ENCODE measurements at regions of chr3 and their contacts with region 1.

Region 1: DNA sequence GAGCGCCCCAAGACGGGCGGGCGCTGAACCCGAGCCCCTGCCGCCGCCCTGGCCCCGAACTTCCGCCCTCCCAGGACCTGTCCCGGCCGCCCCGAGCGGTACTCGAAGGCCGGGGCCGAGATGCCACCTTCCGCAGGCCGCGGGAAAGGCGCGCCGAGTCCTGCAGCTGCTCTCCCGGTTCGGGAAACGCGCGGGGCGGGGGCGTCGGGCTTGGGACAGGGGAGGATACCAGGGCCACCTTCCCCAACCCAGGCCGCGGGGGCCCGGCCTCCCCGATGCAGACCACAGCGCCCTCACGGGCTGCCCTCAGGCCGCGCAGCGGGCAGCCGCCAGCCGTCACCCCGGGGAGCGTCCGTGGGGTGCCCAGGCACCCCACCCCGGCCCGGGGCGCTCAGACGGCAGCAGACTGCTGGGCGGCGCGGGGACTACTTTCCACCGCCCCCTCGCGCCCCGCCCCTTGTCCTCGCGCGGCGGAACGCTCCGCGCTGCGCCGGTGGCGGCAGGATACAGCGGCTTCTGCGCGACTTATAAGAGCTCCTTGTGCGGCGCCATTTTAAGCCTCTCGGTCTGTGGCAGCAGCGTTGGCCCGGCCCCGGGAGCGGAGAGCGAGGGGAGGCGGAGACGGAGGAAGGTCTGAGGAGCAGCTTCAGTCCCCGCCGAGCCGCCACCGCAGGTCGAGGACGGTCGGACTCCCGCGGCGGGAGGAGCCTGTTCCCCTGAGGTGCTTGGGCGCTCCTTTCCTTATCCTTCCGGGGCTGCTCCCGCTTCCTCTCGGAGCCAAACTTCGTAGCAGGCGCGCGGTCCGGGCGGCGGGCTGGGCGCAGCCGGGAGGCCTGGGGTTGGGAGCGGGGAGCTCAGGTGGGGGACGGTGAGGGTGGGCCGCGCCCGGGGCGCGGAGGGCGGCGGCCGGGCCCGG is at the start of gene CTNNB1:
- DNase-seq: peak; percentile 91
- ATAC-seq: peak; percentile 80
- H3K4me3 Mint-ChIP-seq: peak within 1 kb of the TSS; percentile 94
- H3K27ac Mint-ChIP-seq: peak within 1 kb of the TSS; percentile 96
- H3K4me1 Mint-ChIP-seq: peaks cover 40% of the 10 kb centered on the region
- H3K27me3 Mint-ChIP-seq: peaks cover 4% of the 10 kb centered on the region
- CTCF ChIP-seq: no peak
- total RNA-seq, gene CTNNB1: 155 and 164 TPM in 2 replicates

Region 2: DNA sequence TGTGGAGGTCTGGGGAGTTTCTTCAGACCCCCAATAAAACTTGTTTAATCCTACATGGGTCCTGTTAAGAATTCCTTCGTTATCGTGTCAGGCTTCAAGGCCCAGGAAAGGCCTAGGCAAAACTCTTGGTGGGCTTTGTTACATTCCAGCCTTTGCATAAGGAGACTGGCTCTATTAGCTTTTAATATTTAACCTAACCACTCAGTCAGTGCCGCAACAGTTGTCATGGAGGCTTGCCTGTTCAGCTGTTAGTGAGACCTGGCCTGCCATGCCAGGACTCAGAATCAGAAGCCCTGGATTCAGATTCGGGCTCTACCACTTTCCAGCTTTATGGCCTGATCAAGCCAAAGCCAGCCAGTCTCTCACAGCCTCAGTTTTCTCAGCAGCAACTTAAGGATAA is 870.1 kb before region 1 on chr3:
- CTCF ChIA-PET with region 1: no interaction called
- POLR2A ChIA-PET with region 1: no interaction called
- intact Hi-C with region 1: loop called (anchors 5 kb)
- DNase-seq: no peak
- ATAC-seq: no peak
- H3K4me3 Mint-ChIP-seq: no peak overlapping the region
- H3K27ac Mint-ChIP-seq: no peak overlapping the region
- H3K4me1 Mint-ChIP-seq: peaks cover 4% of the 10 kb centered on the region
- H3K27me3 Mint-ChIP-seq: peaks cover 2% of the 10 kb centered on the region
- CTCF ChIP-seq: no peak

Region 3: DNA sequence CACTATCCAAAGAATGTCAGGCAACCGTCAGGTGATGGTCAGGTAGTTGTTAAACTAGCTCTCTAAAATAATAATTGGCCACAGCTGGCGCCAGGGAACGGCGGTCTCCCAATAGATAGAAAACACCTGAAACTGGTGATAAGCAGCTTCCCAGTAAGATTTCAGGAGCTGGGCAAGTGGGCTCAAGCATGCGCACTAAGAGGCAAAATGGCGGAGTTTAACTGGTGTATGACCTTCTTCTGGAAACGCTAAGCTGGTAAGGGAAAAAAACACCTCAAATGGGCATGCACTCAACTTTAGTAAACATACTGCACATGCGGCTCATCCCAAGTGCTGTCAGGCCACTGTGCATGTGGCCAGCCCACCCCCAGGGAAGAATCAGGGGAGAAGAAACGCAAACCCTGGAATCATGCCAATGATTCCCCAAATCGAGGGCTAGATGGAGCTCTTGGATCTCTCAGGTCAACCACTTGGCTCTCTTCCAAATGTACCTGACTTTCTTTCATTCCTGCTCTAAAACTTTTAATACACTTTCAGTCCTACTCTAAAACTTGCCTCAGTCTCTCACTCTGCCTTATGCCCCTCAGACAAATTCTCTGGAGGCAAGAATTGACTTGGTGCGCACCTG is 479.4 kb before region 1 on chr3:
- CTCF ChIA-PET with region 1: no interaction called
- POLR2A ChIA-PET with region 1: interaction called, 11 read pairs
- intact Hi-C with region 1: loop called (anchors 5 kb)
- DNase-seq: no peak
- ATAC-seq: no peak
- H3K4me3 Mint-ChIP-seq: no peak overlapping the region
- H3K27ac Mint-ChIP-seq: peak overlapping the region; percentile 33
- H3K4me1 Mint-ChIP-seq: peaks cover 34% of the 10 kb centered on the region
- H3K27me3 Mint-ChIP-seq: no peaks in the 10 kb centered on the region
- CTCF ChIP-seq: no peak

Region 4: GRCh38 chr3:41224120-41224806 is 25.1 kb after region 1 on chr3:
- CTCF ChIA-PET with region 1: no interaction called
- POLR2A ChIA-PET with region 1: interaction called, 12 read pairs
- intact Hi-C with region 1: no loop called
- DNase-seq: no peak
- ATAC-seq: no peak
- H3K4me3 Mint-ChIP-seq: no peak overlapping the region
- H3K27ac Mint-ChIP-seq: no peak overlapping the region
- H3K4me1 Mint-ChIP-seq: peaks cover 52% of the 10 kb centered on the region
- H3K27me3 Mint-ChIP-seq: no peaks in the 10 kb centered on the region
- CTCF ChIP-seq: no peak

Region 5: GRCh38 chr3:42012935-42013690 is 813.9 kb after region 1 on chr3:
- CTCF ChIA-PET with region 1: no interaction called
- POLR2A ChIA-PET with region 1: interaction called, 4 read pairs
- intact Hi-C with region 1: loop called (anchors 2 kb)
- DNase-seq: peak; percentile 73
- ATAC-seq: peak; percentile 68
- H3K4me3 Mint-ChIP-seq: peak overlapping the region; percentile 97
- H3K27ac Mint-ChIP-seq: peak overlapping the region; percentile 99
- H3K4me1 Mint-ChIP-seq: peaks cover 59% of the 10 kb centered on the region
- H3K27me3 Mint-ChIP-seq: no peaks in the 10 kb centered on the region
- CTCF ChIP-seq: no peak

Measured in activated B cell treated with CpG ODN at 0.5 μM for 24 hours (primary cell).